OCI-LY7 (cell line): ENCODE measurements at regions of chr12 and their contacts with region 1.

Region 1: DNA sequence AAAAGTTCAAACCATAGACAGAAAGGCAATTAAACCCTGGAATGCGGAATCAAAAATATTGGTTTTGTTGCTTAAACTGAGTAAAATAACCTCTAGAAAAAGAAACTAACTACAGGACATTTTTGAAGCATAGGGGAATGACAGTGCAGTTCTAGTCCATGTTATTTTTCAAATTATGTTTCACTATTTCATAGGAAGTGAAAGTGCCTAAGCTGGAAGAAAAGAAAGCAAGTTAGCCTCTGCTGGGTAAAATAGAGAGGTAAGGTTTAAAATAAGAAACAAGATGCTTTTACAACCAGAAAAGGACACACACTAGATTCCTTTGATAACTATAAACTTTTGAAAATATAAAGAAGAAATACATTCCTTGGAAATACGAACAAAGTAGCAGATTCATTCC is 1.1 kb downstream of the CLECL1 start:
- DNase-seq: peak; percentile 77
- H3K4me3 ChIP-seq: peak overlapping the region; percentile 78
- H3K27ac ChIP-seq: peak overlapping the region; percentile 99
- H3K4me1 ChIP-seq: peaks cover 77% of the 10 kb centered on the region
- CTCF ChIP-seq: no peak

Region 2: DNA sequence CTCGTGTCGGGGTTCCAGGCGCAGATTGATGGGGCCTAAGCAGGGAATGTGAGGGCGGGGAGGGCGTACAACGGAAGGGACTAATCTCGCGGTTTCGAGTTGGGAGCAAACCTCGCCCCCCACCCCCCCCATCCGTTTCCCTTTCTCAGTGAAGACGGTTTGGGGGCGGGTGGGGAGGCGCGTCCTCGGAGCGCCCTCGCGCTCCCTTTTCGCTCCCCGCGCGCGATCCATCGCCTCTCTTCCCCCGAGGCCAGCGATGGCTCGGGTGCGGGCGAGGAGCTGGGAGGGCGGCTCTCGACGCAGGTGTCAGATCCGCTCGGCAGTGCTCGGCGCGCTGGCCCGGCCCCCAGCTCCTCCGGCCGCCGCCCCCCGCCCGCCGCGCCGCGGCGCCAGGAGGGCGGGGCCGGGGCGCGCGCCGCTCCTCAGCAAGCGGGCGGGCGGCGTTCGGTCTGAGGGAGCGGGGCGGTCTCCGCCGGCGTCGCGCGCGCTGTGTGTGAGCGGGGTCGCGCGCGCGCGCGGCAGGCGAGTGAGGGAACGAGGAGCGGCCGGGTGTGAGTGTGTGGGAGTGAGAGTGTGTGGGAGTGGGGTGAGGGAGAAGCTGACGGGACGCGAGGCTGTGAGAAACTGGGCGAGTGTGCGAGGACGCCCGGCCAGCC is 1034.2 kb before region 1 on chr12 and contains the start of gene RIMKLB:
- CTCF ChIA-PET with region 1: no interaction called
- POLR2A ChIA-PET with region 1: no interaction called
- intact Hi-C with region 1: loop called (anchors 10 kb)
- DNase-seq: peak; percentile 89
- H3K4me3 ChIP-seq: peak within 1 kb of the TSS; percentile 86
- H3K27ac ChIP-seq: peak within 1 kb of the TSS; percentile 100
- H3K4me1 ChIP-seq: peaks cover 73% of the 10 kb centered on the region
- CTCF ChIP-seq: 0 out of 2 replicates have a peak, but pooled peaks have one; percentile 4
- total RNA-seq, gene RIMKLB: 109 and 117 TPM in 2 replicates

Region 3: GRCh38 chr12:9721394-9722092 is 10.3 kb before region 1 on chr12:
- CTCF ChIA-PET with region 1: interaction called, 3 read pairs
- POLR2A ChIA-PET with region 1: interaction called, 98 read pairs
- intact Hi-C with region 1: loop called (anchors 1 kb)
- DNase-seq: peak; percentile 92
- H3K4me3 ChIP-seq: peak overlapping the region; percentile 42
- H3K27ac ChIP-seq: peak overlapping the region; percentile 99
- H3K4me1 ChIP-seq: peaks cover 100% of the 10 kb centered on the region
- CTCF ChIP-seq: no peak

Region 4: DNA sequence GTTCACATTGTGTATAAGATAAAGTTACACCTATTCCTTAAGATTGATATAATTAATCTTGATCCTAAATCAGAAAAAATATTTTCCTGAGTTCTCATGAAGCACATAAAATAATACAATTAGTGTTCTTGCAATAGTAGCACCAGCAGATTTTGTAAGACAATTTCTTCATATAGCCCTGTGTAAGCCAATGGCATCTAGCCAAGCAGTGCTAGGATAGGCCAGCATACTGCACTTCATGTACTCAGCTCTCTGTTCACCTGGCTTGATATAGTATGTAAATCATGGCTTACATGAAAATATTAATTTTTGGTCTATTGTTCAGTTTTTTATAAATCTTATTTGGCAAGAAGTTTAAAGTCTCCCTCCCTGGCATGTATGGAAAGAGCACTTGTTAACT is 151.4 kb after region 1 on chr12:
- CTCF ChIA-PET with region 1: no interaction called
- POLR2A ChIA-PET with region 1: no interaction called
- intact Hi-C with region 1: no loop called
- DNase-seq: no peak
- H3K4me3 ChIP-seq: no peak overlapping the region
- H3K27ac ChIP-seq: no peak overlapping the region
- H3K4me1 ChIP-seq: peaks cover 5% of the 10 kb centered on the region
- CTCF ChIP-seq: no peak